Activated naive CD4-positive, alpha-beta T cell treated with anti-CD3 and anti-CD28 coated beads for 36 hours (primary cell): ENCODE measurements at regions of chr17 and their contacts with region 1.

Region 1: GRCh38 chr17:46193626-46194392 is 580 bp upstream of the KANSL1 start:
- DNase-seq: peak; percentile 95
- H3K4me3 Mint-ChIP-seq: peak overlapping the region; percentile 80
- H3K27ac Mint-ChIP-seq: peak overlapping the region; percentile 94
- H3K4me1 Mint-ChIP-seq: peaks cover 54% of the 10 kb centered on the region
- H3K27me3 Mint-ChIP-seq: no peaks in the 10 kb centered on the region

Region 2: DNA sequence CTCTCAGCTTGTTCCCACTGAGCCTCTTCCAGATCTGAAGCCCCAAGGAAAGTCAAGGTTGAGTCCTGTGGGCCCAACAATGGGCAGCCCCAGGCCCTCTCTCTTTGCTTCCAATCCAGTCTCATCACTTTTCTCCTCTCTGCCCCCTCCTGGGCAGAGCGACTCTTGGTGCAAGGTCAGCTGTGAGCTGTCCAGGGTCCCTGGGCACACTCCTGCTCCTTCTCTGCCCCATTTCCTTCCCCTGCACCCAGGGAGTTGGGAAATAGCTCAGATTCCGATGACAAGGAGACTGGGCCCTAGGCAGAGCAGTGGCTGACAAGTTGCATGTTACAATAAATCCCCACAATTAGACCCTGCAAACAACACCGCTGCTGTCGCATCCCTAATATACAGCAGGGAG is 425.8 kb before region 1 on chr17:
- CTCF ChIA-PET with region 1: no interaction called
- intact Hi-C with region 1: no loop called
- DNase-seq: no peak
- H3K4me3 Mint-ChIP-seq: no peak overlapping the region
- H3K27ac Mint-ChIP-seq: no peak overlapping the region
- H3K4me1 Mint-ChIP-seq: no peaks in the 10 kb centered on the region
- H3K27me3 Mint-ChIP-seq: peaks cover 12% of the 10 kb centered on the region

Region 3: DNA sequence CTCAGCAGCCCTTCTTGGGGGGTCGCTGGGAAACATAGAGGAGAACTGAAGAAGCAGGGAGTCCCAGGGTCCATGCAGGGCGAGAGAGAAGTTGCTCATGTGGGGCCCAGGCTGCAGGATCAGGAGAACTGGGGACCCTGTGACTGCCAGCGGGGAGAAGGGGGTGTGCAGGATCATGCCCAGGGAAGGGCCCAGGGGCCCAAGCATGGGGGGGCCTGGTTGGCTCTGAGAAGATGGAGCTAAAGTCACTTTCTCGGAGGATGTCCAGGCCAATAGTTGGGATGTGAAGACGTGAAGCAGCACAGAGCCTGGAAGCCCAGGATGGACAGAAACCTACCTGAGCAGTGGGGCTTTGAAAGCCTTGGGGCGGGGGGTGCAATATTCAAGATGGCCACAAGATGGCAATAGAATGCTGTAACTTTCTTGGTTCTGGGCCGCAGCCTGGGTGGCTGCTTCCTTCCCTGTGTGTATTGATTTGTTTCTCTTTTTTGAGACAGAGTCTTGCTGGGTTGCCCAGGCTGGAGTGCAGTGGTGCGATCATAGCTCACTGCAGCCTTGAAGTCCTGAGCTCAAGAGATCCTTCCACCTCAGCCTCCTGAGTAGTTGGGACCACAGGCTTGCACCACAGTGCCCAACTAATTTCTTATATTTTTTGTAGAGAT is 191.4 kb before region 1 on chr17:
- CTCF ChIA-PET with region 1: interaction called, 4 read pairs
- intact Hi-C with region 1: loop called (anchors 1 kb)
- DNase-seq: peak; percentile 82
- H3K4me3 Mint-ChIP-seq: no peak overlapping the region
- H3K27ac Mint-ChIP-seq: no peak overlapping the region
- H3K4me1 Mint-ChIP-seq: no peaks in the 10 kb centered on the region
- H3K27me3 Mint-ChIP-seq: no peaks in the 10 kb centered on the region

Region 4: GRCh38 chr17:46147296-46147695 is 46.5 kb before region 1 on chr17:
- CTCF ChIA-PET with region 1: interaction called, 14 read pairs
- intact Hi-C with region 1: no loop called
- DNase-seq: no peak
- H3K4me3 Mint-ChIP-seq: no peak overlapping the region
- H3K27ac Mint-ChIP-seq: no peak overlapping the region
- H3K4me1 Mint-ChIP-seq: peaks cover 83% of the 10 kb centered on the region
- H3K27me3 Mint-ChIP-seq: no peaks in the 10 kb centered on the region

Region 5: GRCh38 chr17:46179375-46179999 is 14.3 kb before region 1 on chr17:
- CTCF ChIA-PET with region 1: interaction called, 27 read pairs
- intact Hi-C with region 1: loop called (anchors 2 kb)
- DNase-seq: no peak
- H3K4me3 Mint-ChIP-seq: peak overlapping the region; percentile 42
- H3K27ac Mint-ChIP-seq: peak overlapping the region; percentile 77
- H3K4me1 Mint-ChIP-seq: peaks cover 91% of the 10 kb centered on the region
- H3K27me3 Mint-ChIP-seq: no peaks in the 10 kb centered on the region

Region 6: GRCh38 chr17:46922804-46923635 is 729.2 kb after region 1 on chr17 and contains the start of gene GOSR2:
- CTCF ChIA-PET with region 1: no interaction called
- intact Hi-C with region 1: loop called (anchors 2 kb)
- DNase-seq: peak; percentile 92
- H3K4me3 Mint-ChIP-seq: peak within 1 kb of the TSS; percentile 96
- H3K27ac Mint-ChIP-seq: peak within 1 kb of the TSS; percentile 99
- H3K4me1 Mint-ChIP-seq: peaks cover 49% of the 10 kb centered on the region
- H3K27me3 Mint-ChIP-seq: no peaks in the 10 kb centered on the region
- total RNA-seq, gene GOSR2: 32.8 to 38.1 TPM